ENCODE measurements at regions of chr6 and their contacts with region 1.

Region 1: DNA sequence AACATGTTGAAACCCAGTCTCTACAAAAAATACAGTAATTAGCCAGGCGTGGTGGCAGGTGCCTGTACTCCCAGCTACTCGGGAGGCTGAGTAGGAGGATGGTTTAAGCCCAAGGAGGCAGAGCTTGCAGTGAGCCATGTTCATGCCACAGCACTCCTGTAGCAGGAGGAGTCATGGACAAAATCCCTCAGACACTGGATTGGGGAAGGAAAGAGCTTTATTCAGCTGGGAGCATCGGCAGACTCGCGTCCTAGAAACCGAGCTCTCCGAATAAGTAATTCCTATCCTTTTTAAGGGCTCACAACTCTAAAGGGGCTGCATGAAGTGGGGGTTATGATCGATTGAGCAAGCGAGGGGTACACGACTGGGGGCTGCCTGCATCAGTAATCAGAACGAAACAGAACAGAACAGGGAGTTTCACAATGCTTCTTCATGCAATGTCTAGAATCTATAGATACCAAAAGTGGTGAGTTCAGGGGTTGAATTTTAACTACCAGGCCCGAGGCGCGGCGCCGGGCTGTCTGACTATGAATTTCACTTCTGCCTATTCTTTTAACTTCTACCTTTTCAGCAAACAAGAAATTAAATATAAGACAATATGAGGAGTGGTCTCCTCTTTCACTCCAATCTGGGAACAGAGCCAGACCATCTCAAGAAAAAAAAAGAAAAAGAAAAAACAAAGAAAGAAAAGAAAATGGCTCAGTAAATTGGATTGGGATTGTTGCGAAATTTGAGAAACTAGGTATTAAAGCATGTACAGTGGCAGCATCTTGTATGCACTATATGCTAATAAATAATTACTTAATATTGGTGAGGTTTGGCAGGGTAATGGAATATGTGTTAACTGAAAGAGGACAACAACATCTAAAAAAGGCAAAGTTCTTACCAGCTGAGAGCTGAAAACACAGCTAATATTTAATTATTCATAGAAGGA is 23.6 kb downstream of the HMGN4 start:
- DNase-seq: no peak
- ATAC-seq: no peak
- H3K4me3 ChIP-seq: no peak overlapping the region
- H3K4me3 Mint-ChIP-seq: no peak overlapping the region
- H3K27ac ChIP-seq: no peak overlapping the region
- H3K27ac Mint-ChIP-seq: no peak overlapping the region
- H3K4me1 ChIP-seq: no peaks in the 10 kb centered on the region
- H3K4me1 Mint-ChIP-seq: peaks cover 2% of the 10 kb centered on the region
- H3K27me3 ChIP-seq: no peaks in the 10 kb centered on the region
- H3K27me3 Mint-ChIP-seq: no peaks in the 10 kb centered on the region
- CTCF ChIP-seq: no peak

Region 2: GRCh38 chr6:27864906-27865849 is 1303.4 kb after region 1 on chr6:
- CTCF ChIA-PET with region 1: no interaction called
- POLR2A ChIA-PET with region 1: interaction called, 15 read pairs
- intact Hi-C with region 1: no loop called
- DNase-seq: peak; percentile 97
- ATAC-seq: peak; percentile 80
- H3K4me3 ChIP-seq: peak overlapping the region; percentile 60 to 82 (median 69)
- H3K4me3 Mint-ChIP-seq: peak overlapping the region; percentile 97
- H3K27ac ChIP-seq: peak overlapping the region; percentile 81 to 83
- H3K27ac Mint-ChIP-seq: peak overlapping the region; percentile 97
- H3K4me1 ChIP-seq: peaks cover 13 to 35% of the 10 kb centered on the region in 2 donors
- H3K4me1 Mint-ChIP-seq: peaks cover 45% of the 10 kb centered on the region
- H3K27me3 ChIP-seq: no peaks in the 10 kb centered on the region
- H3K27me3 Mint-ChIP-seq: no peaks in the 10 kb centered on the region
- CTCF ChIP-seq: no peak

Measured in B cell (primary cell).